A673 (cell line): ENCODE measurements at regions of chr20 and their contacts with region 1.

Region 1: GRCh38 chr20:37901654-37902503 is 1.0 kb upstream of the VSTM2L start:
- DNase-seq: peak; percentile 85
- H3K4me3 ChIP-seq: peak overlapping the region; percentile 64
- H3K27ac ChIP-seq: no peak overlapping the region
- H3K4me1 ChIP-seq: peaks cover 51% of the 10 kb centered on the region
- H3K27me3 ChIP-seq: no peaks in the 10 kb centered on the region
- CTCF ChIP-seq: peak; percentile 77

Region 2: DNA sequence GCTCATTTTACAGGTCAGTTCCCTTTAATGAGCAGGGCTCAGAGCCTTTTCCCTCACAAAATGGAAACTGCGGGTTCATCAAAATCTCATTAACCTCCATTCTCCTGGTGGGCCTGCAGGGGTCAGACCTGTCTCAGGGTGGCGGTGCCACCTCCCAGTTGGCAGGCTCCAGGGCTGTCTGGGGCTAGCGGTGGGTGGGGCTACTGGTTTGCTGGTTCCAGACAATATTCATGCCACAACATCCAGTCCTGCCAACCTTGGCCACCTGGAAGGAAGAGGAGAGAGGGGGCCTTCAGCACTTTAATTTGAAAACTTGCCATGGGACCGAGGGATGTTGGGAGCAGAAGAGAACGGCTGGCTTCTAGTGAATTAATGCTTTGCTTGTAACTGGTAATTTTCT is 249.9 kb before region 1 on chr20:
- CTCF ChIA-PET with region 1: no interaction called
- POLR2A ChIA-PET with region 1: no interaction called
- intact Hi-C with region 1: loop called (anchors 10 kb)
- DNase-seq: peak; percentile 67
- H3K4me3 ChIP-seq: no peak overlapping the region
- H3K27ac ChIP-seq: no peak overlapping the region
- H3K4me1 ChIP-seq: no peaks in the 10 kb centered on the region
- H3K27me3 ChIP-seq: no peaks in the 10 kb centered on the region
- CTCF ChIP-seq: peak; percentile 65

Region 3: GRCh38 chr20:37680420-37680819 is 221.5 kb before region 1 on chr20:
- CTCF ChIA-PET with region 1: no interaction called
- POLR2A ChIA-PET with region 1: no interaction called
- intact Hi-C with region 1: loop called (anchors 5 kb)
- DNase-seq: peak; percentile 23
- H3K4me3 ChIP-seq: no peak overlapping the region
- H3K27ac ChIP-seq: no peak overlapping the region
- H3K4me1 ChIP-seq: no peaks in the 10 kb centered on the region
- H3K27me3 ChIP-seq: peaks cover 12% of the 10 kb centered on the region
- CTCF ChIP-seq: no peak

Region 4: GRCh38 chr20:37976887-37977286 is 75.0 kb after region 1 on chr20:
- CTCF ChIA-PET with region 1: no interaction called
- POLR2A ChIA-PET with region 1: no interaction called
- intact Hi-C with region 1: no loop called
- DNase-seq: peak; percentile 40
- H3K4me3 ChIP-seq: no peak overlapping the region
- H3K27ac ChIP-seq: no peak overlapping the region
- H3K4me1 ChIP-seq: peaks cover 10% of the 10 kb centered on the region
- H3K27me3 ChIP-seq: no peaks in the 10 kb centered on the region
- CTCF ChIP-seq: no peak

Region 5: DNA sequence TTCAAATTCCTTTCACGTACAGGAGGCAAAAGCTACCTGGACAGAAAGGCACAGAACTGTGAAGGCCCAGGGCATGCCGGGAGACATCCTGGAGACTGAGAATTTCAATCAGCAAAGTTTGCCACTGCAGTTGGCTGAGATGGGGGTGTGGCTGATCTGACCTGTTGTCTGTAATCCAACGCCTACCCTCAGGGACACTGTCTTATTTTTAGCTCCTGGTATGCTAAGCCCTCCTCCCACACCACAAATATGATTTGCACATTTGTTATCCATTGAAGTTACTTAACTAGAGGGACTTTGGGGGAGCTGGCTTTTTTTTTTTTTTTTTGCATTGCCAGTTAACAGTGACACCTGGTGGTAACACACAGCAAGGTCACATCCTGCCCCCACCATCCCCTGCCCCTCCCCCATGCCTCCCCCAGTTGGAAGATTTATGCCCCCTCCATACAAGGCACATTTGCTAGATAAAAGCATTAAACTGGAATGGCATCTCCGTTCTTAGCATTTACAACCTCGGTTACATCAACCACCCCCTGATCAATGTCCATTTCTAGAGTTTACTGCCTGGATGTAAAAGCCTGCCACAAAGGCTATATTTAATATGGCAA is 91.0 kb after region 1 on chr20:
- CTCF ChIA-PET with region 1: interaction called, 5 read pairs
- POLR2A ChIA-PET with region 1: no interaction called
- intact Hi-C with region 1: loop called (anchors 2 kb)
- DNase-seq: peak; percentile 69
- H3K4me3 ChIP-seq: no peak overlapping the region
- H3K27ac ChIP-seq: no peak overlapping the region
- H3K4me1 ChIP-seq: peaks cover 32% of the 10 kb centered on the region
- H3K27me3 ChIP-seq: no peaks in the 10 kb centered on the region
- CTCF ChIP-seq: peak; percentile 68